ENCODE measurements at regions of chr3 and their contacts with region 1.

Region 1: GRCh38 chr3:46998121-46998851 is 18.8 kb downstream of the NBEAL2 start:
- DNase-seq: peak; percentile 57 to 87 (median 77)
- ATAC-seq: peak; percentile 66
- H3K4me3 ChIP-seq: no peak overlapping the region
- H3K4me3 Mint-ChIP-seq: no peak overlapping the region
- H3K27ac ChIP-seq: no peak overlapping the region
- H3K27ac Mint-ChIP-seq: peak overlapping the region; percentile 45
- H3K4me1 ChIP-seq: peaks cover 13% of the 10 kb centered on the region
- H3K4me1 Mint-ChIP-seq: peaks cover 17% of the 10 kb centered on the region
- H3K27me3 ChIP-seq: no peaks in the 10 kb centered on the region
- H3K27me3 Mint-ChIP-seq: no peaks in the 10 kb centered on the region
- CTCF ChIP-seq: peak; percentile 80

Region 2: DNA sequence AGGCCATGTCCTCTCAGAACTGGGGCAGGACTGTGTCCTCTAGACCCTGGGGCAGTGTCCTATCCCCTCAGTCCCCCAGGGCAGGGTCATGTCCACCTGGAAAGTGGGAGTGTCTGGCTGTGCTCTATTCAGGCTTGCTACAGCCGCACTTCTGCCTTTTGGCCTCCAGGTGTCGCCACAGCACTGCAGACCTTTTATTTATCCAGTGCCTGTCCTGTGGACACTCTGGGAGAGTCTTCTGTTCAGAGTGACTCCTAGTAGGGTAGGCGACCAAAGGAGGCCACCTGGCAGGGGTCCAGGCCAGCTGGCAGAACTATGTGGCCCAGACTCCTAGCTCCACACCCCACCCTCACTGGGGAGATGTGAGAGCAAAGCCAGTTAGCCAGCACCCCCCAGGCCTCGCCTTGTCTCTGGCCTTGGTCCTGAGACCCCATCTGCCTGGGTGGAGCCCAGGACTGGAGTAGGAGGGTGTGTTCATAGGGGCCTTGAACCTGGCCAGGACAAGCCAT is 293.2 kb before region 1 on chr3:
- CTCF ChIA-PET with region 1: no interaction called
- POLR2A ChIA-PET with region 1: no interaction called
- intact Hi-C with region 1: loop called (anchors 1 to 2 kb)
- DNase-seq: peak; percentile 36 to 80 (median 68)
- ATAC-seq: peak; percentile 95
- H3K4me3 ChIP-seq: no peak overlapping the region
- H3K4me3 Mint-ChIP-seq: no peak overlapping the region
- H3K27ac ChIP-seq: no peak overlapping the region
- H3K27ac Mint-ChIP-seq: no peak overlapping the region
- H3K4me1 ChIP-seq: peaks cover 4% of the 10 kb centered on the region
- H3K4me1 Mint-ChIP-seq: peaks cover 7% of the 10 kb centered on the region
- H3K27me3 ChIP-seq: peaks cover 5 to 6% of the 10 kb centered on the region in 2 experiments
- H3K27me3 Mint-ChIP-seq: peaks cover 7% of the 10 kb centered on the region
- CTCF ChIP-seq: peak; percentile 95

Region 3: DNA sequence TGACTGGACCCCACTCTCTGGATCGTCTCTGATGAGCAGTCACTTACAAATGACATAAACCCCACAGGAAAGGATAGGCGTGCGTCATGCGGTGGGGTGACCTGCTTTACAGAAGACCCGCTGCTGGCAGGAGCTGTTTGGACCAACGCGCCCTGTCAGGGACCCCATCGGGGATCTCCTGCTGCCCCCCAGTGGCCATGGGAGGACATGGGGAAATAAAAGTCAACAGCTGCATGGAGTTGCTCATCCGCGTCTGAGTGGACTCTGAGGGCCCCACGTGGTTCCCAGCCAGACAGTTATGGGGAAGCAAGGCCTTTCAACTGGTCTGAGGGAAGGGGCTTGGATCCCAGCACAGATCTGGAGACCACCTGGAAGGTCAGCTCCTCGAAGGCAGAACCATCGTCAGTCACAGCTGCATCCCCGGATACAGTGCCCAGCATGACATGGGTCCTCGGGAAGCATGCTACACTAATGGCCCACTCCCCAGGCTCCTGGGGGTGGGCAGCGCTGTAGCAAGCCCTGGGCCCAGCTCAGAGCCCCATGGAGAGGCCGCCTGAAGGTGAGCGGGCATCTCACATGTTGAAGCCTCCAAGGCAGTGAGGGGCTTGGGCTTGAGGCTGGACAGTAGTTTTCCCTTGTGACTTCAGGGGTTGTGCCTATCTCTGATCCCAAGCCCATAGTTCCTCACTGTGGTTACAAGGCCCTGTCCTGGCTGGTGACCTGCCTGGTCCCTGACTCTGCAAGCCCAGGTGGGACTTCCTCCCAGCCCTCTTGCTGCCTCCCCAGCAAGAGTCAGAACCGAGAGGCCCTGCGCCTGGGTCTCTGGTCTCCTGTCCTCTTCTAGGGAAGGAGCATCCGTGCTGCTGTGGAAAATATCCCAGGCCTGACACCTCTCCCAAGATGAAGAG is 88.5 kb before region 1 on chr3:
- CTCF ChIA-PET with region 1: interaction called, 10 read pairs
- POLR2A ChIA-PET with region 1: no interaction called
- intact Hi-C with region 1: loop called in 1 of 2 experiments (anchors 1 kb)
- DNase-seq: peak; percentile 65 to 84 (median 81)
- ATAC-seq: peak; percentile 89
- H3K4me3 ChIP-seq: no peak overlapping the region
- H3K4me3 Mint-ChIP-seq: no peak overlapping the region
- H3K27ac ChIP-seq: no peak overlapping the region
- H3K27ac Mint-ChIP-seq: no peak overlapping the region
- H3K4me1 ChIP-seq: peaks cover 17% of the 10 kb centered on the region
- H3K4me1 Mint-ChIP-seq: peaks cover 18% of the 10 kb centered on the region
- H3K27me3 ChIP-seq: no peaks in the 10 kb centered on the region
- H3K27me3 Mint-ChIP-seq: no peaks in the 10 kb centered on the region
- CTCF ChIP-seq: peak; percentile 91

Region 4: GRCh38 chr3:46935168-46935858 is 63.0 kb before region 1 on chr3:
- CTCF ChIA-PET with region 1: interaction called, 17 read pairs
- POLR2A ChIA-PET with region 1: no interaction called
- intact Hi-C with region 1: no loop called
- DNase-seq: no peak
- ATAC-seq: no peak
- H3K4me3 ChIP-seq: no peak overlapping the region
- H3K4me3 Mint-ChIP-seq: no peak overlapping the region
- H3K27ac ChIP-seq: no peak overlapping the region
- H3K27ac Mint-ChIP-seq: no peak overlapping the region
- H3K4me1 ChIP-seq: peaks cover 36% of the 10 kb centered on the region
- H3K4me1 Mint-ChIP-seq: peaks cover 67% of the 10 kb centered on the region
- H3K27me3 ChIP-seq: no peaks in the 10 kb centered on the region
- H3K27me3 Mint-ChIP-seq: no peaks in the 10 kb centered on the region
- CTCF ChIP-seq: no peak

Region 5: GRCh38 chr3:46966811-46967210 is 31.5 kb before region 1 on chr3:
- CTCF ChIA-PET with region 1: interaction called, 17 read pairs
- POLR2A ChIA-PET with region 1: no interaction called
- intact Hi-C with region 1: no loop called
- DNase-seq: peak in 1 of 9 experiments; percentile 16
- ATAC-seq: peak; percentile 40
- H3K4me3 ChIP-seq: no peak overlapping the region
- H3K4me3 Mint-ChIP-seq: no peak overlapping the region
- H3K27ac ChIP-seq: no peak overlapping the region
- H3K27ac Mint-ChIP-seq: peak overlapping the region; percentile 84
- H3K4me1 ChIP-seq: peaks cover 63% of the 10 kb centered on the region
- H3K4me1 Mint-ChIP-seq: peaks cover 80% of the 10 kb centered on the region
- H3K27me3 ChIP-seq: no peaks in the 10 kb centered on the region
- H3K27me3 Mint-ChIP-seq: no peaks in the 10 kb centered on the region
- CTCF ChIP-seq: no peak

Region 6: GRCh38 chr3:46987743-46988401 is 10.4 kb before region 1 on chr3:
- CTCF ChIA-PET with region 1: interaction called, 18 read pairs
- POLR2A ChIA-PET with region 1: interaction called, 3 read pairs
- intact Hi-C with region 1: no loop called
- DNase-seq: peak; percentile 76 to 96 (median 90)
- ATAC-seq: peak; percentile 96
- H3K4me3 ChIP-seq: peak overlapping the region; percentile 23 to 42
- H3K4me3 Mint-ChIP-seq: peak overlapping the region; percentile 74
- H3K27ac ChIP-seq: peak overlapping the region in 1 of 2 experiments; percentile 67
- H3K27ac Mint-ChIP-seq: peak overlapping the region; percentile 87
- H3K4me1 ChIP-seq: peaks cover 56% of the 10 kb centered on the region
- H3K4me1 Mint-ChIP-seq: peaks cover 67% of the 10 kb centered on the region
- H3K27me3 ChIP-seq: no peaks in the 10 kb centered on the region
- H3K27me3 Mint-ChIP-seq: no peaks in the 10 kb centered on the region
- CTCF ChIP-seq: no peak